Calu3 (cell line): ENCODE measurements at regions of chr1 and their contacts with region 1.

Region 1: GRCh38 chr1:205631727-205632373 is at the start of gene ELK4:
- DNase-seq: peak; percentile 100
- H3K4me3 Mint-ChIP-seq: peak within 1 kb of the TSS; percentile 88
- H3K27ac Mint-ChIP-seq: peak within 1 kb of the TSS; percentile 97
- H3K4me1 Mint-ChIP-seq: peaks cover 7% of the 10 kb centered on the region
- H3K27me3 Mint-ChIP-seq: no peaks in the 10 kb centered on the region
- CTCF ChIP-seq: peak; percentile 90
- total RNA-seq, gene ELK4: 110 and 122 TPM in 2 replicates

Region 2: GRCh38 chr1:205472737-205473441 is 159.0 kb before region 1 on chr1:
- CTCF ChIA-PET with region 1: no interaction called
- intact Hi-C with region 1: no loop called
- DNase-seq: no peak
- H3K4me3 Mint-ChIP-seq: no peak overlapping the region
- H3K27ac Mint-ChIP-seq: no peak overlapping the region
- H3K4me1 Mint-ChIP-seq: peaks cover 16% of the 10 kb centered on the region
- H3K27me3 Mint-ChIP-seq: peaks cover 10% of the 10 kb centered on the region
- CTCF ChIP-seq: no peak

Region 3: GRCh38 chr1:205528887-205529825 is 102.7 kb before region 1 on chr1:
- CTCF ChIA-PET with region 1: interaction called, 7 read pairs
- intact Hi-C with region 1: loop called (anchors 1 kb)
- DNase-seq: peak; percentile 95
- H3K4me3 Mint-ChIP-seq: peak overlapping the region; percentile 23
- H3K27ac Mint-ChIP-seq: peak overlapping the region; percentile 17
- H3K4me1 Mint-ChIP-seq: no peaks in the 10 kb centered on the region
- H3K27me3 Mint-ChIP-seq: no peaks in the 10 kb centered on the region
- CTCF ChIP-seq: peak; percentile 98

Region 4: DNA sequence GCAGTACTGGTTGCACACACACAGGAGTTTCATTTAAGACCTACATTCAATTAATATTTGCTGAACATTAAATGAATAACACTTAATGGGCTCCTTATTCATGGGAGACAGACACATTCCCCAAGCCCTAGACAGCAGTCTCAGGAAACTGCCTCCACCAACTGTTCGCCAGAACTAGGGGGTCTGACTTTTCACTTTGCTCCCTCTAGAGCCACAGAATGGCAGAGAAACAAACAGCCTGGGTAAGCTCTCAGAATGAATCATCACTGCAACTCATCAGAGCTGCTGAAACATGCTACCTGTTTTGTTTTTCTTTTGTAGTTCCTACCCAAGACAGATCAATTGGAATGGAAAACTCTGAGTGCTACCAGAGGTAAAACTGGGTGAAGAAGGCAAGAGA is 31.8 kb before region 1 on chr1:
- CTCF ChIA-PET with region 1: interaction called, 22 read pairs
- intact Hi-C with region 1: loop called (anchors 2 kb)
- DNase-seq: no peak
- H3K4me3 Mint-ChIP-seq: peak overlapping the region; percentile 30
- H3K27ac Mint-ChIP-seq: peak overlapping the region; percentile 86
- H3K4me1 Mint-ChIP-seq: peaks cover 68% of the 10 kb centered on the region
- H3K27me3 Mint-ChIP-seq: no peaks in the 10 kb centered on the region
- CTCF ChIP-seq: no peak

Region 5: GRCh38 chr1:205616563-205617293 is 15.1 kb before region 1 on chr1:
- CTCF ChIA-PET with region 1: interaction called, 5 read pairs
- intact Hi-C with region 1: loop called (anchors 1 kb)
- DNase-seq: peak; percentile 72
- H3K4me3 Mint-ChIP-seq: peak overlapping the region; percentile 45
- H3K27ac Mint-ChIP-seq: peak overlapping the region; percentile 91
- H3K4me1 Mint-ChIP-seq: peaks cover 73% of the 10 kb centered on the region
- H3K27me3 Mint-ChIP-seq: no peaks in the 10 kb centered on the region
- CTCF ChIP-seq: no peak

Region 6: GRCh38 chr1:205750138-205751035 is 118.5 kb after region 1 on chr1 and contains the start of gene NUCKS1:
- CTCF ChIA-PET with region 1: no interaction called
- intact Hi-C with region 1: no loop called
- DNase-seq: peak; percentile 99
- H3K4me3 Mint-ChIP-seq: peak within 1 kb of the TSS; percentile 84
- H3K27ac Mint-ChIP-seq: peak within 1 kb of the TSS; percentile 98
- H3K4me1 Mint-ChIP-seq: peaks cover 14% of the 10 kb centered on the region
- H3K27me3 Mint-ChIP-seq: peaks cover 15% of the 10 kb centered on the region
- CTCF ChIP-seq: no peak
- total RNA-seq, gene NUCKS1: 242 and 276 TPM in 2 replicates